Activated T-helper 2 cell treated with anti-CD3 and anti-CD28 coated beads, Interferon-gamma antibody, Interleukin-2, Interleukin-4, amounts not matched to agents 10 μg/mL and 5 μg/mL and 100 μg/mL, durations not matched to agents 14 hours and 24 hours and 36 hours (primary cell): ENCODE measurements at regions of chr1 and their contacts with region 1.

Region 1: DNA sequence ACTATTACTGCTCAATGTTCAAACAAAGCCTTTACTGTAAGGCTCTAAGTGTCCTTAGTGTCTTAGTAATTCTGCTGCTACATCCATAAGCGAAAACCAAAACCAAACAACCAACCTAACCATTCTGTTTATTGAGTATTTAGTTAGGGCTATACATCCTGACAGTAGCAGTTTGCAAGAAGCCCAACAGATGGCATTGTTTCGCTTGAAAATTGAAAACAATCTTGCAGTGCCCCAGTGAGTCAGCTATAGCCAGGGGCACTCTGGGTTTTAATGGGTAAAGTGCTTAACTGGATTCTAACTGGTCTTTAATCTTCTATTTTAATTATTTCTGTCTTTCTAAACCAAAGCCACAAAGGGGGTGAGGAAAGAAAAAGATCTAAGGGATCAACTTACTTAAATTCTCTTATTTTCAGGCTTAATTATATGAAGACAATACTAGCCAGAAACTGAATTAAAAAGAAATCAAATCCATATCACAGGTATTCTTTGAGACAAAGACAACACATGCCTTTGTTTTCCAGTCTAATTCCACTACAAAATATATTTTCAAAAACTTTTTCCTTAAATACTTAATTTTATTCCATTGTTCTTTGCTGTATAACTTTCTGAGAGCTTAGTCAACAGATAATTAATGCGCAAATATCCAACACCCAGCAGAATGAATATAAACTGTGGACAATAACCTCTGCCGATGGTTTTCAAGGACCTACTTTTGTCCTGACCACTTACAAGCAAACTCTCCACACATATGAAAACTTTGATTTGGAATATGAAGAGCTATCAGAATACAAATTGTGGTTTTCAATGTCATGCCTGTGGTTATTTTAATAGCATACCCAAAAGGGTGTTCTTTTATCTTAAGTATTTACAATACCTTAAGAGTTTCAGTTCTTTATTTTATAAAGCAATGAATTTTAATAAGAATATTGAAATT is 15.2 kb downstream of the POGZ start:
- DNase-seq: peak; percentile 58
- H3K4me3 Mint-ChIP-seq: no peak overlapping the region
- H3K27ac Mint-ChIP-seq: peak overlapping the region; percentile 33
- H3K4me1 Mint-ChIP-seq: peaks cover 39% of the 10 kb centered on the region
- H3K27me3 Mint-ChIP-seq: no peaks in the 10 kb centered on the region

Region 2: GRCh38 chr1:151510957-151511635 is 67.0 kb after region 1 on chr1 and contains the start of gene CGN:
- intact Hi-C with region 1: loop called (anchors 5 kb)
- DNase-seq: peak; percentile 79
- H3K4me3 Mint-ChIP-seq: peak within 1 kb of the TSS; percentile 81
- H3K27ac Mint-ChIP-seq: no peak within 1 kb of the TSS
- H3K4me1 Mint-ChIP-seq: peaks cover 20% of the 10 kb centered on the region
- H3K27me3 Mint-ChIP-seq: peaks cover 28% of the 10 kb centered on the region
- total RNA-seq, gene CGN: 0.34 and 0.50 TPM in 2 replicates

Region 3: DNA sequence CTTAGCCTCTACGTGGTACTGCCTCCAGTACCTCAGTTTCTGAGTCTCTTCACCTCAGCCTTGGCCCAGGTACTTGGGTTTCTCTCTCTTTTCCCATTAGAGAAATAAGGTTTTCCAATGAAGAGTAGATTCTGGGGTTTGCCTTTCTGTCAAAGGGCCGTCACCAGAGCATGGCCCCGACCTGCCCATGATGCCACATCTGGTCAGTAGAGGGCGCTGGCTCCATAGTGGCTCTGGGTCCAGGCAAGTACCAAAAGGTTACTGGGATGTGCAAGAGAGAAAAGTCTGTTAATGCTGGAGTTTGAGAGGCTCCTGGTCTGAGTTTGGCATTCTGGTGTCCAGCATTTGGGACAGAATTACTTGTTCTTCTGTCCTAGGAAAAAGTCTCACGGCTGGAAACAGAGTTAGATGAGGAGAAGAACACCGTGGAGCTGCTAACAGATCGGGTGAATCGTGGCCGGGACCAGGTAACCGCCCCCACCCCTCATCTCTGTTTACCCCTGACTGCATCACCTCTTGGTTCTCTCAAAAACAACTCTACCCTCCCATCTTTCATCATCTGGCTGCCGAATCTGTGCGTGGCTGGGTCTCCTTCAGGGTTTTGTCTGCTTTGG is 90.7 kb after region 1 on chr1:
- intact Hi-C with region 1: loop called (anchors 1 kb)
- DNase-seq: peak; percentile 66
- H3K4me3 Mint-ChIP-seq: no peak overlapping the region
- H3K27ac Mint-ChIP-seq: no peak overlapping the region
- H3K4me1 Mint-ChIP-seq: peaks cover 3% of the 10 kb centered on the region
- H3K27me3 Mint-ChIP-seq: no peaks in the 10 kb centered on the region

Region 4: DNA sequence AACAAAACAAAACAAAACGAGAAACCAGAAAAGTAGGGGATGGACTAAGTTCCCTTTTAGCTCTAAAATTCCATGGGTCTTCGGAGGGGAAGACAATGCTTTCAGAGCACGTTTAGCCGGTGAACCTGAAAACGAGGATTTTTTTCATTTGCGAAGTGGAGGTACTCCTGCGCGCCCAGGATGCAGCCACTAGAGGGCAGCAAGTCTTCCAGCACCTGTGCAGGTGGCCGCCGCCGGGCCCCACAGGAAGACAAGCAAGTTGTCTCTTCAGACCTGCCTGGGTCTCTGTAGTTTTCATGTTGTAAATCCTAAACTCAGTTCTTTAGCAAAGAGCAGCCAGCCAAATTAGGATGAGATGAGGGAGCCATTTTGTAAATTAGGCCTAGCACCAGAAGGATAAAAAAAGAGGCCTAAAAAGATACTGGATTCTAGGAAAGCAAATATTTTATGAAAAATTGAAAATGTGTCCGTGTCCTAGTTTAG is 150.1 kb after region 1 on chr1:
- intact Hi-C with region 1: loop called (anchors 2 kb)
- DNase-seq: peak; percentile 71
- H3K4me3 Mint-ChIP-seq: peak overlapping the region; percentile 9
- H3K27ac Mint-ChIP-seq: no peak overlapping the region
- H3K4me1 Mint-ChIP-seq: peaks cover 8% of the 10 kb centered on the region
- H3K27me3 Mint-ChIP-seq: peaks cover 37% of the 10 kb centered on the region

Region 5: DNA sequence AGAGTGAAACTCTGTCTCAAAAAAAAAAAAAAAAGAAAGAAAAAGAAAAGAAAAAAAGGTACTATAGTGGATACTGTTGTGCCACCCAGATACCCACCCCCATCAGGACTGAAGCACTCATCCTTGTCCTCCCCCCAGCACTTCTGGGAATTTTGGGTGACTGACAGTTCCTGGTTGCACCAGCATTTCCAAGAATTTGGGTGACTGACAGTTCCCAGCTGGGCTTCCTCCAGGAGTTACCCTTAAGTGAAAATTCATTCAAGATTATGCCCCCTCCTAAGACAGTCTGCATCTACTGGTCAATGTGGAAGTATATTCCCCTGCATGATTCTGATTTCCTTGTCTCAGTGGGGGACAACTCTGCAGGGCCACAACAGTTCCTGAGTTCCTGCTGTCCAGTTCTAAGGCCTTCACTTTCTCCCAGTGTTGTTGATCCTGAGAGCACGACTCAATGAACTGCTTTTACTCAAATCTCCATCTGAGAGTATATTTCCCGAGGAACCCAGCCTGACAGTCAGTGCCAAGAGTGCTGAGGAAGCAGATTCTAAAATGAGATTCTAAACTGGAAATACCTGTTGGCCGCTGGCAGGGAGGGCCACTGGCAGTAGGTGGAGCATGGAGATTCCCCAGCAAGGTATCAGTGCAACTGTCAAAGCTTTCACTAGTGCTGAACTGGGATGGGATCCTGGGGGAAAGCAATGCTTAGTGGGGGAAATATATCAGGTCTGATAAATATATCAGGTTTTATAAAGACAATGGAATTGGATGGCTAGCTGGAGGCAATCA is 295.7 kb after region 1 on chr1:
- intact Hi-C with region 1: loop called (anchors 2 kb)
- DNase-seq: no peak
- H3K4me3 Mint-ChIP-seq: no peak overlapping the region
- H3K27ac Mint-ChIP-seq: no peak overlapping the region
- H3K4me1 Mint-ChIP-seq: no peaks in the 10 kb centered on the region
- H3K27me3 Mint-ChIP-seq: peaks cover 24% of the 10 kb centered on the region